Esophagus muscularis mucosa (tissue), 4 donors: ENCODE measurements at regions of chr12 and their contacts with region 1.

Region 1: GRCh38 chr12:119229837-119230236 is 51.1 kb downstream of the HSPB8 start:
- DNase-seq: no peak
- H3K4me3 ChIP-seq: peak overlapping the region in 3 of 4 donors; percentile 19 to 39 (median 24)
- H3K27ac ChIP-seq: no peak overlapping the region
- H3K4me1 ChIP-seq: peaks cover 0 to 7% (median 0%) of the 10 kb centered on the region in 4 donors
- H3K27me3 ChIP-seq: no peaks in the 10 kb centered on the region
- CTCF ChIP-seq: no peak
- EP300 ChIP-seq: no peak
- POLR2A ChIP-seq: no peak

Region 2: DNA sequence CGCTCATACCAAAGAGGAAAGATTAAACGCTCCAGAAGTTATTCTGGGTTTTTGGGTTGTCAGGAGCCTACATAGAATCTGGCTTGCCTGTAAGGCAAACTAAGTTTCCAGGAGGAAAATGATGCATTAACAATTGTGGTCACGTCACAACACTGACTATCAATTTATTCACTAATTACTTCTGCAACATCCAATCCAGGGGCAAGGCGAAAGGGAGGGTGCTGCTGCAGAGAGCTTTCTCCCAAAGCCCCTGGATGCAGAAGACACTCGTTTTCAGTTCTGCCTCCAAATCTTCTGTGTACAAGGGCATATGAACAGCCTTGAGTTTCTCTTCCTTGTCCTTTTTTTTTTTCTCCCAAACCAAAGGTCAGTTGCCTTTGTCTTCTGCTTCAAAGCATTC is 259.0 kb before region 1 on chr12:
- intact Hi-C with region 1: no loop called
- DNase-seq: no peak
- H3K4me3 ChIP-seq: no peak overlapping the region
- H3K27ac ChIP-seq: no peak overlapping the region
- H3K4me1 ChIP-seq: no peaks in the 10 kb centered on the region
- H3K27me3 ChIP-seq: peaks cover 0 to 10% (median 0%) of the 10 kb centered on the region in 4 donors
- CTCF ChIP-seq: no peak
- EP300 ChIP-seq: no peak
- POLR2A ChIP-seq: no peak

Region 3: DNA sequence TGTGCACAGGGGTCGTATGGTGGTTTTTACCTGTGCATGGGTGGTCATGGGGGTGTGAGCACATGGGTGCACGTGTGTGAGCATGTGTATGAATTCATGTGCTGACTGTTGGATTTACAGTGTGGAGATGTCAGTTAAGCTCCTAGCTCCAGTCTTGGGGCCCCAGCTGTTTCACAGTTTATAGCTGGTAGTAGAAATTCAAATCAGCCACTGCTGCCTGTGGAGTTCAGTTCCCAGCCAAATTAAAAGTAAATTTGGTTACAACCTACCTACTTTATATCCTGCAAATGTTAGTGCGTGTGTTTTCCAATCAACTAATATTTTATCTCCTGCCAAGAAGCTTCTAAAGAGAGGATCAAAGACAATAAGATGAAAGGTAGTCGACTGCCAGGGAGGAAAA is 107.1 kb before region 1 on chr12:
- intact Hi-C with region 1: loop called (anchors 10 kb)
- DNase-seq: no peak
- H3K4me3 ChIP-seq: no peak overlapping the region
- H3K27ac ChIP-seq: no peak overlapping the region
- H3K4me1 ChIP-seq: no peaks in the 10 kb centered on the region
- H3K27me3 ChIP-seq: no peaks in the 10 kb centered on the region
- CTCF ChIP-seq: no peak
- EP300 ChIP-seq: no peak
- POLR2A ChIP-seq: no peak

Region 4: GRCh38 chr12:119412811-119413794 is 183.3 kb after region 1 on chr12:
- intact Hi-C with region 1: loop called (anchors 10 kb)
- DNase-seq: peak; percentile 94
- H3K4me3 ChIP-seq: no peak overlapping the region
- H3K27ac ChIP-seq: peak overlapping the region in 3 of 4 donors; percentile 20 to 56 (median 23)
- H3K4me1 ChIP-seq: peaks cover 6 to 38% (median 28%) of the 10 kb centered on the region in 4 donors
- H3K27me3 ChIP-seq: no peaks in the 10 kb centered on the region
- CTCF ChIP-seq: peak; percentile 90 to 94 (median 93)
- EP300 ChIP-seq: no peak
- POLR2A ChIP-seq: no peak